PC-9 (cell line): ENCODE measurements at regions of chr12 and their contacts with region 1.

Region 1: GRCh38 chr12:106511365-106511764 is 71.4 kb upstream of the RFX4 start:
- DNase-seq: no peak
- H3K4me3 ChIP-seq: no peak overlapping the region
- H3K27ac ChIP-seq: no peak overlapping the region
- H3K4me1 ChIP-seq: no peaks in the 10 kb centered on the region
- H3K27me3 ChIP-seq: no peaks in the 10 kb centered on the region
- CTCF ChIP-seq: no peak

Region 2: DNA sequence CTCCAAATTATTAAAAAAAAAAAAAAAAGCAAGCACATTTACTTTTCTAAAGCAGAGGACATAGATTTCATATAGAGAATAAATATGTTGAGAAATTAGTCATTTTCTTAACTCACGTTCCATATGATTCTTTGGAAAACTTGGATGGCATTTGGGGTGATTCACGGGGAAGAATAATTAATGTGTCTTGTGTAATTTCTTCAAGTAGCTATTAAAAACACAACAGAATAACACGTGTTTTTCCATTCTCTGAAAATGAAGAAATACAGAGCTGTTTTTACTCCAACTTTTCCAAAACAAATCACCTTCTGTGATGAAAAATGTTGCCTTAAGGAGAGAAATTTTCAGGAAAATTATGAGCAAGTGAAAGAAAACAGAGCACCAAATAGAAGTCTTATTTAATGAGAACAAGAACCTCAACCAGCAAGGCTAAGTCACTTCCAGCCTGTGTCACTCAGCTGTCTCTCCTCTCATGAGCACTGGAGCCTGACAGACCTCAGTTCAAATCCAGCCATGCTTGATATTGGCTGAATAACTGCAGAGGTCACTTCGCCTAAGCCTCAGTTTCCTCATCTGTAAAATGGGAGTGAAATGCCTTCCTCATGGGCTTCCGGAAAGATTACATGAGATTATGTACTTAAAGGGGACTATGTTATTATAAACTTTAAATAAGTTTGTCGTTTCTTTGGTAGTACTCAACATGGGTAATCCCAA is 329.8 kb before region 1 on chr12:
- CTCF ChIA-PET with region 1: no interaction called
- POLR2A ChIA-PET with region 1: no interaction called
- intact Hi-C with region 1: loop called (anchors 5 kb)
- DNase-seq: no peak
- H3K4me3 ChIP-seq: no peak overlapping the region
- H3K27ac ChIP-seq: no peak overlapping the region
- H3K4me1 ChIP-seq: peaks cover 15% of the 10 kb centered on the region; the same call in 1 of the 2 replicates
- H3K27me3 ChIP-seq: peaks cover 3% of the 10 kb centered on the region; the same call in 1 of the 2 replicates
- CTCF ChIP-seq: no peak

Region 3: GRCh38 chr12:106480251-106480650 is 31.1 kb before region 1 on chr12:
- CTCF ChIA-PET with region 1: no interaction called
- POLR2A ChIA-PET with region 1: no interaction called
- intact Hi-C with region 1: no loop called
- DNase-seq: no peak
- H3K4me3 ChIP-seq: no peak overlapping the region
- H3K27ac ChIP-seq: no peak overlapping the region
- H3K4me1 ChIP-seq: no peaks in the 10 kb centered on the region
- H3K27me3 ChIP-seq: no peaks in the 10 kb centered on the region
- CTCF ChIP-seq: no peak